Ascending aorta (tissue), 2 donors: ENCODE measurements at regions of chr6 and their contacts with region 1.

Region 1: DNA sequence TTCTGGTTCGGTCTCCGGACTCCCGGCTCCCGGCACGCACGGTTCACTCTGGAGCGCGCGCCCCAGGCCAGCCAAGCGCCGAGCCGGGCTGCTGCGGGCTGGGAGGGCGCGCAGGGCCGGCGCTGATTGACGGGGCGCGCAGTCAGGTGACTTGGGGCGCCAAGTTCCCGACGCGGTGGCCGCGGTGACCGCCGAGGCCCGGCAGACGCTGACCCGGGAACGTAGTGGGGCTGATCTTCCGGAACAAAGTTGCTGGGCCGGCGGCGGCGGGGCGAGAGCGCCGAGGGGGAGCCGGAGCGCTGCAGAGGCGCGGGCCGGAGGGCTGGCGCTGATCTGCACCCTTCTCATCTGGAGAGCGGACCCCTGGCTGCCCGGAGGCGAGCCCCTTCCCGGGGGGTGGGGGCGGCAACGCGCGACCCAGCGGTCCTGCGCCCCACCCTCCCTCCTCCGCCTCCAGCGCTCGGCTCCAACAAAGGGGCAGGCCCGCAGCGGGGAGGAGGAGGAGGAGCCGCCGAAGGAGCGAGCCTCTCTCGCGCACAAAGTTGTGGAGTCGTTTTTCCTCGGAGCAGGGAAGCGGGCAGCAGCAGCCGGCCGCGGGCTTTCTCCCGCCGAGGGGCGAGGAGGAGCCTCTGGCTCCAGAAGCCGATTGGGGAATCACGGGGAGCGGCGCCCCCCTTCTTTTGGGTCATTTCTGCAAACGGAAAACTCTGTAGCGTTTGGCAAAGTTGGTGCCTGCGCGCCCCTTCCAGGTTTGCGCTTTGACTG is at the start of gene UTRN:
- DNase-seq: peak; percentile 20 to 88
- H3K4me3 ChIP-seq: peak within 1 kb of the TSS; percentile 75 to 98
- H3K27ac ChIP-seq: peak within 1 kb of the TSS; percentile 98 to 99
- H3K4me1 ChIP-seq: peaks cover 0 to 8% of the 10 kb centered on the region in 2 donors
- H3K27me3 ChIP-seq: no peaks in the 10 kb centered on the region
- CTCF ChIP-seq: no peak
- total RNA-seq, gene UTRN: 69.9 TPM

Region 2: DNA sequence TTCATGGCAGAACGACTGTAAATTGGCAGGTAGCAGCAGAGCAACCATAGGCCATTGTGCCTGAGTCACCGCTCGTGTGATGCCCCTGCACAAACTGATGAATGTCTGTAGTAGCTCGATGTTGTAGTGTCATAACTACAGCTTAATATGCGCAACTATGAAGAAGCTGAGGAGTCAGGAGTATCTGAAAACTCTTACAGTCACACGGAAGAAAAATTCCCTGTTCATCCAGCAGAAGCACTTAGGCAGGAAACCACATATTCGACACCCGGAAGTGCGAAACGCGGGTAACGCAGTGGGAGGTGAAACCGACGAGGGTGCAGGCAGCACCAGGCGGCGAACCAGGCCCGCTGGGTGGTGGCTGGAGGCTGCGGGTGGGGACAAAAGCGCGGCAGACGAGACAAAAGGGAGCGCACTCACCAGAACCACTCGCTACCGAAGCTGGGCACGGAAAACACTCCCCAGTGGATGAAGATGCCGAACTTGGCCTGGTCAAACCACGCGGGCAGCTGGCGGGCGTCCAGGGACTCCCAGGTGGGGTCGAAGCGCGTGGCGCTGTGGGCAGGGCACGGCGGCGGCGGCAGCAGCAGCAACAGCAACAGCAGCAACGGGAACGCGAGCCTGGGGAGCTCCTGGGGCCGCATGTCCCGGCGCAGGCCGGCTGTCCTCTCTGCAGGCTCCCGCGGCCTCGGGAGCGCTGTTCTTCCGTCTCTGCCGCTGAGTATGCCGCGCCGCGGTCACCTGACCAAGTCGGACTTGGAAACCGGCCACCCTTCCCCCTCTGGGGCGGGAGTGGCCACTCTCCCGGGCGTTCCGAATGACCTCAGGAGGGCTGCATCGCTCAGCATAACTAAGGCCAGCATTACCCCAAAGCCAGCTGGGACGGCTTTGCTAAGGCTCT is 773.7 kb before region 1 on chr6 and contains the start of gene FUCA2:
- intact Hi-C with region 1: no loop called
- DNase-seq: peak; percentile 76 to 96
- H3K4me3 ChIP-seq: peak within 1 kb of the TSS; percentile 78 to 85
- H3K27ac ChIP-seq: peak within 1 kb of the TSS; percentile 83 to 90
- H3K4me1 ChIP-seq: peaks cover 5 to 13% of the 10 kb centered on the region in 2 donors
- H3K27me3 ChIP-seq: no peaks in the 10 kb centered on the region
- CTCF ChIP-seq: no peak
- total RNA-seq, gene FUCA2: 9.7 TPM

Region 3: GRCh38 chr6:144149891-144150709 is 134.9 kb before region 1 on chr6 and contains the start of gene STX11:
- intact Hi-C with region 1: loop called (anchors 5 kb)
- DNase-seq: peak; percentile 29 to 82
- H3K4me3 ChIP-seq: peak within 1 kb of the TSS; percentile 68 to 80
- H3K27ac ChIP-seq: peak within 1 kb of the TSS; percentile 19 to 47
- H3K4me1 ChIP-seq: peaks cover 0 to 4% of the 10 kb centered on the region in 2 donors
- H3K27me3 ChIP-seq: no peaks in the 10 kb centered on the region
- CTCF ChIP-seq: no peak
- total RNA-seq, gene STX11: 29.5 TPM

Region 4: GRCh38 chr6:144265390-144265789 is 19.6 kb before region 1 on chr6:
- intact Hi-C with region 1: loop called (anchors 1 kb)
- DNase-seq: no peak
- H3K4me3 ChIP-seq: no peak overlapping the region
- H3K27ac ChIP-seq: peak overlapping the region; percentile 60 to 81
- H3K4me1 ChIP-seq: peaks cover 0 to 24% of the 10 kb centered on the region in 2 donors
- H3K27me3 ChIP-seq: no peaks in the 10 kb centered on the region
- CTCF ChIP-seq: no peak

Region 5: GRCh38 chr6:144343701-144344428 is 58.9 kb after region 1 on chr6:
- intact Hi-C with region 1: no loop called
- DNase-seq: no peak
- H3K4me3 ChIP-seq: peak overlapping the region in 1 of 2 donors; percentile 29
- H3K27ac ChIP-seq: peak overlapping the region in 1 of 2 donors; percentile 42
- H3K4me1 ChIP-seq: peaks cover 6 to 34% of the 10 kb centered on the region in 2 donors
- H3K27me3 ChIP-seq: no peaks in the 10 kb centered on the region
- CTCF ChIP-seq: no peak

Region 6: GRCh38 chr6:144478483-144478882 is 193.5 kb after region 1 on chr6:
- intact Hi-C with region 1: loop called (anchors 1 kb)
- DNase-seq: no peak
- H3K4me3 ChIP-seq: no peak overlapping the region
- H3K27ac ChIP-seq: peak overlapping the region; percentile 3 to 59
- H3K4me1 ChIP-seq: peaks cover 2 to 21% of the 10 kb centered on the region in 2 donors
- H3K27me3 ChIP-seq: no peaks in the 10 kb centered on the region
- CTCF ChIP-seq: no peak

Region 7: DNA sequence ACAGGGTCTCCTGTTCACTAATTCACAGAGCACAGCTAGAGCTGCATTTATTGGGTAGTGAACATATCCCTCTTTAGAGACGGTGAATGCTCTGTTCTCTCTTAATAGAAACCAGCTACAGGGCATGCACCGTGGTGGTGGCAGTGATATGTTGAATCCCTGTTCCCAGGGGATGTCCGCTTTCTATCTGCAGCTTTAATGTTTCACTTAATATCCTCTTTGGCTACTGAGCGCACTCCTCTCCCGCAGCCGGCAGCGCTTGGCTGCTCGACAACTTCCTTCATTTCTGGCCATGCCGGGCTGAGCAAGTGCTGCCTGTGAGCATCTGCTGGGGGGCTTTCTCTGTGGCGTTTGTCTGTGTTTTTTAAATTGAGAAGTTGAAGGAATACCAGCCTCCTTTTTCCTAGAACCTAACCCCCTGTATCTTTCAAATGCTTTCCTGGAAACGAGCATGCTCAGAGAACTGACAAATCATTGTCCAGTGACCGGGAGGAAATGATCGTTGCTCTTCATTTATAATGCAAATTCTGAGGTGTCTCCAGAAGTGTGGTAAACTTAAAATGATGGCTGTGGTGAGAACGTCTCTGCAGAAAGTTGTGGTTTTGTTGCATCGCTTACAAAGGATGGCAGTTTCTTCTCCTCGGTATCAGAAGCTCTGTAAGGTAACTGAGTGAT is 298.1 kb after region 1 on chr6:
- intact Hi-C with region 1: no loop called
- DNase-seq: no peak
- H3K4me3 ChIP-seq: no peak overlapping the region
- H3K27ac ChIP-seq: no peak overlapping the region
- H3K4me1 ChIP-seq: no peaks in the 10 kb centered on the region
- H3K27me3 ChIP-seq: no peaks in the 10 kb centered on the region
- CTCF ChIP-seq: no peak

Region 8: DNA sequence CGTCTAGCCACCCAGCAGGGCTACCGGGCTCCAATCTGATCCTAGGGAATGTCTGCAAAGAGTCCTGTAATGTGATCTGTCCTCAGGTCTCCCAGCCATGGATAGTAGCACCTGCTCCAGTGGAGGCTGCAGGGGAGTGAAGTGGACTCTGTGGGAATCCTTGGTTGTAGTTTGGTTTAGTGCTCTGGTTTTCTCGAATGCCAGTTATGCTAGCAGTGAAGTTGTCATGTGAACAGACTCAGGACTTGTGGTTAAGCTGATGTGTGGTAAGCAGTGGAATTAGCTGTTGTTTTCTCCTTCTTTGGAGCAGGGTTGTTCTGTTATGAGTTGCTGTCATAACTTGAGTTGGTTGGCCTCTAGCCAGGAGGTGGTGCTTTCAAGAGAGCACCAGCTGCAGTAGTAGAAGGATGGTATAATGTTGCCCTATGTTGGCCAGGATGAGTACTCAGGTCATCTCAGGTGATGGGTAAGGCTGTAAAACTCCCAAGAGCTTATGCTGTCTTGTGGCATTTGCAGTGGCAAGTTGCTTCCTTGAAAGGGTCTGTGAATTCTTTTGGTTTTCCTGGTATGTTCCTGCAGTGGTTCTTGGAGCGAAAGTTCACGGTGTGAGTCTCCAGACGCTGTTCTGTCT is 390.4 kb after region 1 on chr6:
- intact Hi-C with region 1: no loop called
- DNase-seq: no peak
- H3K4me3 ChIP-seq: no peak overlapping the region
- H3K27ac ChIP-seq: no peak overlapping the region
- H3K4me1 ChIP-seq: peaks cover 0 to 9% of the 10 kb centered on the region in 2 donors
- H3K27me3 ChIP-seq: no peaks in the 10 kb centered on the region
- CTCF ChIP-seq: no peak